ENCODE measurements at regions of chr20 and their contacts with region 1.

Region 1: GRCh38 chr20:48904365-48905296 is 16.9 kb upstream of the ARFGEF2 start:
- DNase-seq: peak; percentile 84
- ATAC-seq: peak; percentile 58
- H3K4me3 Mint-ChIP-seq: no peak overlapping the region
- H3K27ac Mint-ChIP-seq: no peak overlapping the region
- H3K4me1 Mint-ChIP-seq: peaks cover 30% of the 10 kb centered on the region
- H3K27me3 Mint-ChIP-seq: peaks cover 4% of the 10 kb centered on the region

Region 2: GRCh38 chr20:48635433-48636310 is 269.0 kb before region 1 on chr20:
- CTCF ChIA-PET with region 1: interaction called, 23 read pairs
- DNase-seq: peak; percentile 74
- ATAC-seq: peak; percentile 70
- H3K4me3 Mint-ChIP-seq: no peak overlapping the region
- H3K27ac Mint-ChIP-seq: peak overlapping the region; percentile 54
- H3K4me1 Mint-ChIP-seq: peaks cover 39% of the 10 kb centered on the region
- H3K27me3 Mint-ChIP-seq: no peaks in the 10 kb centered on the region

Region 3: DNA sequence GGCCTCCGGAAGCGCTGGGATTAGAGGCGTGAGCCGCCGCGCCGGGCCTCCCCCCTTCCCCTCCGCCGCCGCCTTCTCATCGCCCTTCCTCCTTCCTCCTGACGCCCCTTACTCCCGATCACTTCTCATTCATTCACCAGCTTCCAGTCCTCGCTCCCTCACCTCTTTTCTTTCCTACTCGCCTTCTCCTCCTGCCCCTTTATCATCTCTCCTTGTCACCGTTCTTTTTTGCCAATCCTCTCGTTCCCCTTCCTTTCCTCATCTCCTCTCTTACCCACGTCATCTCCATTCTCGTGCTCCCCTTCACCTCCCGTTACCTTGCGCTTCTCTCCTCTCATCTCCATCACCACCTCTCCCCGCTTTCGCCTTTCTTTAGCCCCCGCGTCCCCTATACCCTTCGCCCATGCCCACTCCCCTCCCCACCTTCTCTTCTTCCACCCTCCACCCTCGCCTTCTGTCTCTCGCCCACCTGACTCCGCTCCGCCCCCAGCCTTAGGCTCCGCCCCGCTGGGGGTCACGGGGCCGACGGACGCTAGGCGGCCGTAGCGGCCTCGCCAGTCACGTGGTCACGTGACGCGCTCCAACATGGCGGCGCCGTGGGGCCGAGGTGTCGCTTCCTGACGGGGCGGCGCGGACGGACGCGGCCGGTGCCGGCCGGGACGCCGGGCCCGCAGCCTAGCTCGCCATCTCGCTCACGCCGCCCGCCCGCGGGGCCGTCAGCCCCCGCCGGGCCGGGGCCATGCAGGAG is 16.7 kb after region 1 on chr20 and contains the start of gene ARFGEF2:
- CTCF ChIA-PET with region 1: interaction called, 17 read pairs
- DNase-seq: peak; percentile 95
- ATAC-seq: peak; percentile 96
- H3K4me3 Mint-ChIP-seq: peak within 1 kb of the TSS; percentile 90
- H3K27ac Mint-ChIP-seq: peak within 1 kb of the TSS; percentile 92
- H3K4me1 Mint-ChIP-seq: peaks cover 37% of the 10 kb centered on the region
- H3K27me3 Mint-ChIP-seq: peaks cover 8% of the 10 kb centered on the region
- total RNA-seq, gene ARFGEF2: 19.0 to 23.7 TPM

Measured in activated CD8-positive, alpha-beta memory T cell treated with anti-CD3 and anti-CD28 coated beads, Interleukin-2, amount 10 ng/mL, durations not matched to agents 7 days and 5 days (primary cell).